ENCODE measurements at regions of chr12 and their contacts with region 1.

Region 1: GRCh38 chr12:26853303-26854030 is 20.5 kb upstream of the ITPR2 start:
- DNase-seq: peak; percentile 46
- ATAC-seq: peak; percentile 97
- H3K4me3 Mint-ChIP-seq: no peak overlapping the region
- H3K27ac Mint-ChIP-seq: peak overlapping the region; percentile 38
- H3K4me1 Mint-ChIP-seq: no peaks in the 10 kb centered on the region
- H3K27me3 Mint-ChIP-seq: no peaks in the 10 kb centered on the region
- CTCF ChIP-seq: no peak

Region 2: DNA sequence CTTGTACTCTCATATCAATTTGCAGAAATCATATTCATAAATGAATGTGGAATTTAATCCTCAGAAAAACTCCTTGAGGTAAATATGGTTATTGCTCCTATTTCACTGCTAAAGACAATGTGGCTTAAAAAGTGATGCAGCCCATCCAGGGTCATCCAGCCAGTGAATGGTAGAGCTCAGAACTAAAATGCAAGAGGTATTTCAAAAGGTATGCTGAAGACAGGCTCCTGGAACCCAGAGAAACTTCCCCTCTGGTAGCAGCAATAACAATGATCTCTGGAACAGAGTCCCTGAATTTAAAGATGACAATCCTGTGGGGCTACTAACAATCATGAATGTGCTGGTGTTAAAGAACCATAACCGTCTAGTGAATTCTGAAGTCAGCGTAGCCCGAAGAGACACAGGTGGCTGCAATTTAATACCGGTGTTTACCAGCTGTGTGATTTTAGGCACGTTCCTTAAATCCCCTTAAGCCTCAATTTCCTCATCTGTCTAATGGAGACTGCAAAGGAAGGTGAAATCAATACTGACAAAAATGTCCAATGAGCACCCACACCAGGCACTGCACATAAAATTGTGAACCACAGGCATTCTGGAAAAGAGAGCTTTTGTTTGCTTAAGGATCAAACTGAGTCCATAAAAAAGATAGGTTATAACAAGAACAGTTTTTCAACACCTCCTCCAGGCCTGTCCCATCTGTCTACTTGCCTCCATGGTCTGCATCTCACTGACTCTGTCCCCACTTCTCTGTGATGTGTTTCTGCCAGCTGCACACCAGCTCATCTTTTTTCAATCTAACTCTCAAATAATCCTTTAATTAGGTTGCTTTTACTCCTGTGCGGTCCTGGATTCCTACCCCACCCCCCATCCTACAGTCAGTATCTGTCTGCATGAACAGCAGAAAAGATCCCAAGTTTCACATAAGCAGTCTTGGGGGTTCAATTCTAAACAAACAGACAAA is 150.2 kb after region 1 on chr12:
- CTCF ChIA-PET with region 1: no interaction called
- POLR2A ChIA-PET with region 1: no interaction called
- intact Hi-C with region 1: no loop called
- DNase-seq: no peak
- ATAC-seq: no peak
- H3K4me3 Mint-ChIP-seq: no peak overlapping the region
- H3K27ac Mint-ChIP-seq: no peak overlapping the region
- H3K4me1 Mint-ChIP-seq: peaks cover 47% of the 10 kb centered on the region
- H3K27me3 Mint-ChIP-seq: no peaks in the 10 kb centered on the region
- CTCF ChIP-seq: no peak

Region 3: GRCh38 chr12:27123642-27124041 is 270.2 kb after region 1 on chr12:
- CTCF ChIA-PET with region 1: no interaction called
- POLR2A ChIA-PET with region 1: no interaction called
- intact Hi-C with region 1: loop called (anchors 5 kb)
- DNase-seq: no peak
- ATAC-seq: no peak
- H3K4me3 Mint-ChIP-seq: no peak overlapping the region
- H3K27ac Mint-ChIP-seq: no peak overlapping the region
- H3K4me1 Mint-ChIP-seq: no peaks in the 10 kb centered on the region
- H3K27me3 Mint-ChIP-seq: no peaks in the 10 kb centered on the region
- CTCF ChIP-seq: no peak

Region 4: DNA sequence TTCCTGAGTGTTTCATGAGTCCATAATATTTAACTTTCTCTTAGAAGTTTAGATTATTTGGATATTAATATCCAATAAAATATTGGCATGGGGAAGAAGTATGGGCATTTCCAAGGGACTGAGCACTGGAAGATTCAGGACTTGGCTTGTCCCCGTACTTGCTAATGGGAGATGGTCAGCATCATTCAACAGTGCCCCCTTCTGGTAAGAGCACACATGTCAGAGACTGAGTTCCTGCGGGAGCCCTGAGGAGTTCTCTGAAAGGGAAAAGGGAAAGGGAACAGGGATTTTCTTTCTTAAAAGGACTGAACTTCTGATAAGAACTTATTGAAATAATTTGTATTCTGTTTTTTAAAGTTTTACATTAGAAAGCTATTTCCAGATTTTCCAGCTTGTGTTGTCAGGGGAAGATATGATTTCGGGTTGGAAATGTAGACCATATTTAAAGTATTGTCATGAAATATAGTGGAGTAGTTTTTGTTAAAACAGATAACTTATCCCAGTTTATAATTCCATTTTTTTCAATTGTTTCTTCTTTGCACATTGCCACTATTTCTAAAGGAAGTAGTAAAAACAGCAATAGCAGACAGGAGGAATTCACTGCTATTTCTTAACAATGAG is 288.7 kb after region 1 on chr12:
- CTCF ChIA-PET with region 1: no interaction called
- POLR2A ChIA-PET with region 1: no interaction called
- intact Hi-C with region 1: loop called (anchors 5 kb)
- DNase-seq: no peak
- ATAC-seq: peak; percentile 76
- H3K4me3 Mint-ChIP-seq: no peak overlapping the region
- H3K27ac Mint-ChIP-seq: no peak overlapping the region
- H3K4me1 Mint-ChIP-seq: peaks cover 12% of the 10 kb centered on the region
- H3K27me3 Mint-ChIP-seq: no peaks in the 10 kb centered on the region
- CTCF ChIP-seq: peak; percentile 43

Region 5: GRCh38 chr12:27703710-27704452 is 850.4 kb after region 1 on chr12:
- CTCF ChIA-PET with region 1: no interaction called
- POLR2A ChIA-PET with region 1: no interaction called
- intact Hi-C with region 1: loop called (anchors 5 kb)
- DNase-seq: no peak
- ATAC-seq: peak; percentile 92
- H3K4me3 Mint-ChIP-seq: no peak overlapping the region
- H3K27ac Mint-ChIP-seq: no peak overlapping the region
- H3K4me1 Mint-ChIP-seq: no peaks in the 10 kb centered on the region
- H3K27me3 Mint-ChIP-seq: peaks cover 9% of the 10 kb centered on the region
- CTCF ChIP-seq: no peak